ENCODE measurements at regions of chr11 and their contacts with region 1.

Region 1: DNA sequence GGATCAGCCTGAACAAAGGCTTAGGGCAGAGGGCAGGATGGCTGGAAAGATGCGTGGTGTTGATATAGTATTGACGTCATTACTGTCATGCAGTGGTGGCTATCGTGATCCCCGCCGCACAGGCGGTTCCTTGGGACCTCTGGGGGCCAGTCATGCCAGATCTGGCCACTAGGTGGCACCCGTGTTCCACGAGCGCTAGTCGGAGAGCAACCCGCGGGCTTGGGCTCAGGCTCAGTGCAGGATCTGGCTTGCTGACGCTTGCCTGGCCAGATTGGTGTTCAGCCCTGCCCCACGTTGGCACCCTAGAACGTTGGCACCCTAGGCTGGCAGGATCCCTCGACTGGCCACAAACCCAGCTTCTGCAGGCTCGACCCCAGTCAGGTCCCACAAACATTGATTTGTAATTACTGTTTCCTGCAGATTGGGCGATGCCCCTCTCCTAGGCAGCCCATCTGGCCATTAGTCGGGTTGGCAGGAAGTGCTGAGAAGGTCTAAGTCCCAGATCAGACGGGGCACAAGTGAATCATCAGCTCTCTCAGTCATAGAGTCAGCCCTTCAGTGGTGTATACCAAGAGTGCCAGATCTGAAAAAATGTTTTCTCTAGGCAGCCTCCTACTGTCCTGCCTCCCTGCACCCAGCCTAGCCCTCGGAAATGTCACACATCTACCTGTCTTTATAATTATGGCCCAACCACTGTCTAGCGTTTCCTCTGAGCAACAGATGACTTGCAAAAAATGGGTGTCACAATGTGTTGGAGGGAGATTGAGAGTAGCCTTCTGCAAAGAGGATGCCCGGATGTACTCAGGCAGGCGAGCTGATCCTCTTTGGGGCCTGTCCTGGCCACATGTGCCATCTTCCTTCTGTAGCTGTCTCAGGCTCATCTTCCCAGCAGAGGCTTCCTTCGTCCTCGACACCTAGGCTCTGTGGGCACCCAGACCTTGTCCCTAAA is 315.3 kb downstream of the TMEM135 start:
- DNase-seq: peak; percentile 89
- H3K4me3 Mint-ChIP-seq: no peak overlapping the region
- H3K27ac Mint-ChIP-seq: no peak overlapping the region
- H3K4me1 Mint-ChIP-seq: peaks cover 10% of the 10 kb centered on the region
- H3K27me3 Mint-ChIP-seq: peaks cover 6% of the 10 kb centered on the region

Region 2: GRCh38 chr11:86938900-86939880 is 413.8 kb before region 1 on chr11:
- CTCF ChIA-PET with region 1: interaction called, 7 read pairs
- intact Hi-C with region 1: loop called (anchors 2 kb)
- DNase-seq: no peak
- H3K4me3 Mint-ChIP-seq: no peak overlapping the region
- H3K27ac Mint-ChIP-seq: no peak overlapping the region
- H3K4me1 Mint-ChIP-seq: no peaks in the 10 kb centered on the region
- H3K27me3 Mint-ChIP-seq: peaks cover 6% of the 10 kb centered on the region

Region 3: GRCh38 chr11:87437844-87438223 is 84.8 kb after region 1 on chr11:
- CTCF ChIA-PET with region 1: no interaction called
- intact Hi-C with region 1: no loop called
- DNase-seq: no peak
- H3K4me3 Mint-ChIP-seq: no peak overlapping the region
- H3K27ac Mint-ChIP-seq: no peak overlapping the region
- H3K4me1 Mint-ChIP-seq: no peaks in the 10 kb centered on the region
- H3K27me3 Mint-ChIP-seq: no peaks in the 10 kb centered on the region

Region 4: DNA sequence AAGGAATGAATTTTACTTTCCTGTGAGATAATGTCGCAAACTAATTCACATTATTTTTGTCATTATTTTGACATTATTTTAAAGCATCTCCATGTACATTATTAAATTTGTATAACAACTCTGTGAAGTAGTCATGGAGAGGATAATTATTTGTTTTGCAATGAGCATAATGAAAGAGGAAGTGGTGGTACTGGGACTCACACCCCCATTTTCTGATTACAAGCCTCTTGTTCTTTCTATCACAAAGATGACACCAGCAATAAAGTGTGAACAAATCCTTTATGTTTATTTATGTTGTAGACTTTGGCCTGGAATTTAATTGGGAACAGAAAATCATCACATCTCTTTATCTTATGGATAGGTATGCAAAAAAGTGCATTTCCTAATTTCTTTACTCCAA is 207.3 kb after region 1 on chr11:
- CTCF ChIA-PET with region 1: no interaction called
- intact Hi-C with region 1: no loop called
- DNase-seq: no peak
- H3K4me3 Mint-ChIP-seq: no peak overlapping the region
- H3K27ac Mint-ChIP-seq: no peak overlapping the region
- H3K4me1 Mint-ChIP-seq: no peaks in the 10 kb centered on the region
- H3K27me3 Mint-ChIP-seq: no peaks in the 10 kb centered on the region

Region 5: DNA sequence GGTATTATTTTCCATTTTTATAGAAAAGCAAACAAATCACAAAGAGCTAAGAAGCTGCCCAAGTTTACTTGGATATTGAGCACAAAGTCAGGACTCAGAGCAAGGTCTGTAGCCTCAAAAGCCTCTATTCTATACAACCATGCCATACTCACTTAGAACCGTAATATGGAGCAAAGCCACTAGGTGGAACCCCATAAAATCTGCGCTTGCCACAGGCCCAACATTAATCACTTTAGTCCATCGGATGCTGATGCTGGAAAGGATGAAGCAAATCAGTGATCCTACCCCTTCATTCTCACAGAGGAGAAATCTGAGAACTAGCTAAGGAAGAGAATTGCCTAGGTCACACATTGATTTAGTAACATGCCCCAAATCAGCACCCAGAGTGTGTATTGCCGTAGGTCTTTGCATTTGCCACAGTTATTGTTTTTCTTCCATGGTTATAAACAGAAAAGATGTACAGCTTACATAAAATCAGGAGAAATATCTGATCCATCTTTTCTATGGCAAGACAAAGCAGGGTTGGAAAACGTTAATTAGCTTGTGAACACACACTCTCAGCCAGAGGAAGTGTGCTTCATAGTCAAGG is 879.0 kb after region 1 on chr11:
- CTCF ChIA-PET with region 1: no interaction called
- intact Hi-C with region 1: loop called (anchors 5 kb)
- DNase-seq: peak; percentile 34
- H3K4me3 Mint-ChIP-seq: no peak overlapping the region
- H3K27ac Mint-ChIP-seq: no peak overlapping the region
- H3K4me1 Mint-ChIP-seq: no peaks in the 10 kb centered on the region
- H3K27me3 Mint-ChIP-seq: peaks cover 4% of the 10 kb centered on the region

Region 6: DNA sequence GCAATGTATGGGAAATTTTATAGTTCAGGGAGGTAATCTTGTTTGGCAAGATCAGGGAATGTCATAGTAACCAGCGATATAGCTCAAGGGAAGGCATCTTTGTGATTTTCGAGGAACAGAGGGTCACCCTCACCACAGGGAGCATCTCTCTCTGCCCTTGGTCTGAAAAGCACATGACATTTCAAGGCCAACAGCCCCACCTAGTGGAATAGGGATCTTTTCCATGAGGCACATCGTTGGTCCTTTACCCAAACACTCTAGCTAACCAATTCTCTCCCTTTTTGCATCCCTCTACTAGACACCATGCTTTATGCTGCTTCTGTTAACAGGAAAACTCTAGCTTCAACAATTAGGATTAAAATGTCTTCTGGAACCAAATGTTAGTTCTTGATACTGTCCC is 1533.8 kb after region 1 on chr11:
- CTCF ChIA-PET with region 1: interaction called, 4 read pairs
- intact Hi-C with region 1: loop called (anchors 5 kb)
- DNase-seq: peak; percentile 36
- H3K4me3 Mint-ChIP-seq: no peak overlapping the region
- H3K27ac Mint-ChIP-seq: no peak overlapping the region
- H3K4me1 Mint-ChIP-seq: no peaks in the 10 kb centered on the region
- H3K27me3 Mint-ChIP-seq: no peaks in the 10 kb centered on the region